ENCODE measurements at regions of chr12 and their contacts with region 1.

Region 1: DNA sequence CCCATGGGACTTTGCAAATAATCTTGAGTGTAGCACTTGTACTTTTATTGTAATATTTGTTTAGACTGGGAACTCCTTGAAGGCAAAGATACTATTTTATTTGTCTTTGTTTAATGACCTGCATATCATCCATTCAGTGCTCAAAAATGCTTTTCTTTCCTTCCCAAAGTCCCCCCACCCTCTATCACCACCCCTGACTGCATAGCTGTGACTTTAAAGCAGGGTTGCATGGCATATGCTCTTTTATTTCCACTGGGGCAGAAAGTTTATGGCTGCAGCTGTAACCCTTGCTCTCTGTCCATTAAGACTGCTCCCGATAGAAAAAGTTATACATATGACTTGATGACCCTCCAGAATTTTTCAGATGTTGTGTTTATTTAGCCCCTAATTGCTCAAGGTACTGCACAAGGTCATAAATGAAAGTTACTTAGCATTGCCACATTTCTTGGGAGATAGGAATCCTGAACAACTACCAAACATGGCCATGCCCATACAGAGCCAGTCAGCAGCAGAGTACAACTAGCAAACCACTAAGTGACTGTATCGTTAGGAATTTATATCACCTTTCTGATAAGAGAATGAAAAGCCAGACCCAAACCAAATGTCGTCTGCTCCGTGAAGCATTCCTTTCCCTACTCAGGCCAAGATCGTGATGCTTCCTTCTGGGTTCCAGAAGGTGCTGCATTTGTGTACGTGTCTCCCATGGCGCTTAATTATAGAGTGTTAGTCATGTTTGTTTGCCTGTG is 114.3 kb downstream of the DIP2B start:
- DNase-seq: no peak
- ATAC-seq: no peak
- H3K4me3 ChIP-seq: no peak overlapping the region
- H3K4me3 Mint-ChIP-seq: no peak overlapping the region
- H3K27ac ChIP-seq: no peak overlapping the region
- H3K27ac Mint-ChIP-seq: peak overlapping the region; percentile 73
- H3K4me1 ChIP-seq: peaks cover 25% of the 10 kb centered on the region
- H3K4me1 Mint-ChIP-seq: peaks cover 72% of the 10 kb centered on the region
- H3K27me3 ChIP-seq: no peaks in the 10 kb centered on the region
- H3K27me3 Mint-ChIP-seq: no peaks in the 10 kb centered on the region
- CTCF ChIP-seq: no peak

Region 2: DNA sequence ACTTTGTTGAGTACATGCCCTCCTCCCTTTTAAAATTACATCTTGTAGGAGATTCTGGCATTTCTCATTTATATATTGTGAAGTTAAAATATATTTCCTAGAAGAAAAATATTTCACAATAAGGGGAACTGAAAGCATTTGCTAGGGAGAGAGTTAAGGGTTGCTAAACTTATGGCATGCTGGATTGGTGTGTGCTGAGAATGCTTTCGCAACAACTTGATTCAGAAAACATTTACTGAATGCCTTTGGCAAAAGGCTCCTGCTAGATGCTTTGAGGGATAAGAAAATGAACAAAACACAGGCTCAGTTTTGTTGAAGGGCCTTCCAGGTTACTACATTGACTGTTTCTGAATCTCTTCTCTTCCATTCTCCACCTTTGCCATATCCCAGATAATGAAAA is 46.8 kb before region 1 on chr12:
- CTCF ChIA-PET with region 1: no interaction called
- POLR2A ChIA-PET with region 1: no interaction called
- intact Hi-C with region 1: loop called in 1 of 2 experiments (anchors 5 kb)
- DNase-seq: peak in 3 of 14 experiments; percentile 8 to 35 (median 34)
- ATAC-seq: no peak
- H3K4me3 ChIP-seq: no peak overlapping the region
- H3K4me3 Mint-ChIP-seq: no peak overlapping the region
- H3K27ac ChIP-seq: no peak overlapping the region
- H3K27ac Mint-ChIP-seq: peak overlapping the region; percentile 8
- H3K4me1 ChIP-seq: peaks cover 7% of the 10 kb centered on the region
- H3K4me1 Mint-ChIP-seq: peaks cover 57% of the 10 kb centered on the region
- H3K27me3 ChIP-seq: no peaks in the 10 kb centered on the region
- H3K27me3 Mint-ChIP-seq: no peaks in the 10 kb centered on the region
- CTCF ChIP-seq: no peak